B cell (primary cell): ENCODE measurements at regions of chr6 and their contacts with region 1.

Region 1: DNA sequence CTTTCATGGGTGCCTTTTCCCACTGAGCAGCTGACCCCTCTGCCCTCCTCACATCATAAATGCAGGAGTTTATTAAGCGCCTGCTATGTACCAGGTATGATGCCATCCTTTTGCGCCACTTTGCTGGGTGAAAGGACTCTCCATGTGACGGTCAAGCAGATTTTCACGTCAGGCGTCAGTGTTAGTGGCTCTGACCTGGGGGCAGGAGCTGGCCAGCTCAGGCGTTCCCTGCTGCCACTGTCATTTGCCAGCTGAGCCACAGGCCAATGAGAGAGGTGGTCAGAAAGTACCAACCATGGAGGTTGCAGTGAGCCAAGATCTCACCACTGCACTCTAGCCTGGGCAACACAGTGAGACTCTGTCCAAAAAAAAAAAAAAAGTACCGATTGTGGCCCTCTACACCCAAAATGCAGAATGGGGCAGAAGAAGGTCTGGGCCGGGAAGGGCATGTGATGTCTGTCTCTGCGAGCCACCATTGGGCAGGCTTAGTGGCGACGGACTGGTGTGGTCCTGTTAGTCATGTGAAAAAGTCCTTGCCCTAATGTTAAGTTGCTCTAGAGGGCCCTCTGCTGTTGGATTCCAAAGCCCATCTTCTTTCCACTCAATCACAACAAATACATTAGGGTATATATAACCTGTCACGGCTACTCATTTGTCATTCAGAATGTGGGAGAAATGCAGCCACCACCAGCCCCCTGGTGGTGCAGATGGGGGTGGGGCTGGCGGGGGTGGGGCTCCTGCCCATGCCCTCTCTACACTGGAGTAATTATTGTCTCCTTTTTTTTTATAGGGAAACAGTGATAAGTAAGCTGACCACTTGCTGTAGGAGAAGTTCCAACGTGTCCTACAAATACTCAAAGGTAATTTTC is 18.4 kb upstream of the SLC22A1 start:
- DNase-seq: peak; percentile 54
- ATAC-seq: peak; percentile 54
- H3K4me3 ChIP-seq: no peak overlapping the region
- H3K4me3 Mint-ChIP-seq: no peak overlapping the region
- H3K27ac ChIP-seq: no peak overlapping the region
- H3K27ac Mint-ChIP-seq: no peak overlapping the region
- H3K4me1 ChIP-seq: no peaks in the 10 kb centered on the region
- H3K4me1 Mint-ChIP-seq: no peaks in the 10 kb centered on the region
- H3K27me3 ChIP-seq: no peaks in the 10 kb centered on the region
- H3K27me3 Mint-ChIP-seq: no peaks in the 10 kb centered on the region
- CTCF ChIP-seq: peak; percentile 46

Region 2: DNA sequence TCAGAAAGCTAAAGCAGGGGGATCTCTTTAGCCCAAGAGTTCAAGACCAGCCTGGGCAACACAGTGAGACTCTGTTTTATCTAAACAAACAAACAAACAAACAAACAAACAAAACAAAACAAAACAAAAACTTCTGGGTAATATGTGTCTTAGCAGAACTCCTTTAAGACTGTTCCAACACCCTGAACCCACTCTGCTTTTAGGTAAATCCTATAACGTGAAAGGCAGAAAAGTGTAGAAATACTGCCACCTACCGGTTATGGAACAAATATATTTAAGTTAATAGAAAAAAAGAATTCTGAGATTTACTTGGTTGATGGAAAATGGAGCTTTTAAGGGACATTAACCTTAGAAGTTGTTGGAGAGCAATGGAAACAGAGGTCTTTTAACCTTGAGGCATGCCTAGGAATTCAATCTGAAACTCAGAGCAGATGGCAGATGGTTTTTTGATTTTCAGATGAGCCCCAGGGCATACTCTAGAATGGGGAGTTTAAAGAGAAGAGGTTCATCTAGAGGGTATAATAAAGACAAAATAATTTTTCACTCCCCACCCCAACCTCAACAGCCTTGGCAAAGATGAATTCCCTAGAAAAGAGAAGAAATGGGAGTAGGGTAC is 448.6 kb before region 1 on chr6:
- CTCF ChIA-PET with region 1: no interaction called
- POLR2A ChIA-PET with region 1: no interaction called
- intact Hi-C with region 1: no loop called
- DNase-seq: peak; percentile 70
- ATAC-seq: no peak
- H3K4me3 ChIP-seq: no peak overlapping the region
- H3K4me3 Mint-ChIP-seq: no peak overlapping the region
- H3K27ac ChIP-seq: no peak overlapping the region
- H3K27ac Mint-ChIP-seq: no peak overlapping the region
- H3K4me1 ChIP-seq: no peaks in the 10 kb centered on the region
- H3K4me1 Mint-ChIP-seq: no peaks in the 10 kb centered on the region
- H3K27me3 ChIP-seq: no peaks in the 10 kb centered on the region
- H3K27me3 Mint-ChIP-seq: no peaks in the 10 kb centered on the region
- CTCF ChIP-seq: peak; percentile 84

Region 3: GRCh38 chr6:159862103-159862502 is 241.1 kb before region 1 on chr6:
- CTCF ChIA-PET with region 1: interaction called, 9 read pairs
- POLR2A ChIA-PET with region 1: no interaction called
- intact Hi-C with region 1: loop called (anchors 1 kb)
- DNase-seq: no peak
- ATAC-seq: no peak
- H3K4me3 ChIP-seq: no peak overlapping the region
- H3K4me3 Mint-ChIP-seq: no peak overlapping the region
- H3K27ac ChIP-seq: no peak overlapping the region
- H3K27ac Mint-ChIP-seq: no peak overlapping the region
- H3K4me1 ChIP-seq: no peaks in the 10 kb centered on the region
- H3K4me1 Mint-ChIP-seq: no peaks in the 10 kb centered on the region
- H3K27me3 ChIP-seq: peaks cover 0 to 7% (median 3%) of the 10 kb centered on the region in 4 experiments
- H3K27me3 Mint-ChIP-seq: peaks cover 24% of the 10 kb centered on the region
- CTCF ChIP-seq: no peak

Region 4: GRCh38 chr6:160254467-160255312 is 151.5 kb after region 1 on chr6:
- CTCF ChIA-PET with region 1: no interaction called
- POLR2A ChIA-PET with region 1: no interaction called
- intact Hi-C with region 1: no loop called
- DNase-seq: no peak
- ATAC-seq: no peak
- H3K4me3 ChIP-seq: no peak overlapping the region
- H3K4me3 Mint-ChIP-seq: no peak overlapping the region
- H3K27ac ChIP-seq: no peak overlapping the region
- H3K27ac Mint-ChIP-seq: no peak overlapping the region
- H3K4me1 ChIP-seq: no peaks in the 10 kb centered on the region
- H3K4me1 Mint-ChIP-seq: no peaks in the 10 kb centered on the region
- H3K27me3 ChIP-seq: no peaks in the 10 kb centered on the region
- H3K27me3 Mint-ChIP-seq: peaks cover 24% of the 10 kb centered on the region
- CTCF ChIP-seq: no peak